Activated T-helper 1 cell treated with anti-CD3 and anti-CD28 coated beads, Interleukin-12 subunit alpha, Interleukin-12 subunit beta, Interleukin-2, Interleukin-4 antibody, amounts not matched to agents 30 ng/mL and 10 ng/mL and 1 ng/mL, durations not matched to agents 14 hours and 24 hours and 36 hours (primary cell): ENCODE measurements at regions of chr7 and their contacts with region 1.

Region 1: DNA sequence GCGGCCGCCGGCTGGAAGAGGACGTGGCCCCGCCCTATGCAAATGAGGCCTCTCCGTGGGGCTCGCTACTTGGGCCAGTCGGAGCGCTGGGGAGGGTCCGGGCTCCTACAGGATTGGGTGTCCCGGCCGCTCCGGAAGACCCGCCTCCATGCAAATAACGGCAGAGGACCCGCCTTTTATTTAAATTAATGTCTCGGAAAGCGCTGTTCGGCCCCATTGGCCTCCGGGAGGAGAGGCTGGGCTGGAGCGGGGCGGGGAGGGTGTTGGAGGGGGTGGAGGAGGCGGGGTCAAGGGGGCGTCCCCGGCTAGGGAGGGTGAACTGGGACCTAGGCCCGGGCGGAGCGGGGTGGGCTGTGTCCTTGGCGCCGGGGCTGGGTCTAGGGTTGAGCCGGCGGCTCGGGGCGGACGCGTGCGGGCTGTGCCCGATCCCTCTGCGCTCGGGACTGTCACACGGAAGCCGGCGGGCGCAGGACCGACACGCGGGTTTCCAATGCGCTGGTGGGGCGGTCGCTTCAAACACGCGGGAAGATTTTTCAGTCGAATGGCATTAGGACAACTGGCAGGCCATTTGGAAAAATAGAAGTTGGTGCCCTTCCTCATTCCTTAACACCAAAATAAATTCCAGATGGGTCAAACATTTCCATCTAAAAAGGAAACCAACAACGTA is 344 bp upstream of the POLM start:
- DNase-seq: peak; percentile 97
- H3K4me3 Mint-ChIP-seq: peak overlapping the region; percentile 90
- H3K27ac Mint-ChIP-seq: peak overlapping the region; percentile 84
- H3K4me1 Mint-ChIP-seq: peaks cover 28% of the 10 kb centered on the region
- H3K27me3 Mint-ChIP-seq: no peaks in the 10 kb centered on the region

Region 2: GRCh38 chr7:43925984-43926797 is 156.5 kb before region 1 on chr7 and contains the start of gene UBE2D4:
- intact Hi-C with region 1: loop called (anchors 2 kb)
- DNase-seq: peak; percentile 88
- H3K4me3 Mint-ChIP-seq: peak within 1 kb of the TSS; percentile 95
- H3K27ac Mint-ChIP-seq: peak within 1 kb of the TSS; percentile 97
- H3K4me1 Mint-ChIP-seq: peaks cover 30% of the 10 kb centered on the region
- H3K27me3 Mint-ChIP-seq: peaks cover 2% of the 10 kb centered on the region
- total RNA-seq, gene UBE2D4: 15.3 and 17.7 TPM in 2 replicates

Region 3: DNA sequence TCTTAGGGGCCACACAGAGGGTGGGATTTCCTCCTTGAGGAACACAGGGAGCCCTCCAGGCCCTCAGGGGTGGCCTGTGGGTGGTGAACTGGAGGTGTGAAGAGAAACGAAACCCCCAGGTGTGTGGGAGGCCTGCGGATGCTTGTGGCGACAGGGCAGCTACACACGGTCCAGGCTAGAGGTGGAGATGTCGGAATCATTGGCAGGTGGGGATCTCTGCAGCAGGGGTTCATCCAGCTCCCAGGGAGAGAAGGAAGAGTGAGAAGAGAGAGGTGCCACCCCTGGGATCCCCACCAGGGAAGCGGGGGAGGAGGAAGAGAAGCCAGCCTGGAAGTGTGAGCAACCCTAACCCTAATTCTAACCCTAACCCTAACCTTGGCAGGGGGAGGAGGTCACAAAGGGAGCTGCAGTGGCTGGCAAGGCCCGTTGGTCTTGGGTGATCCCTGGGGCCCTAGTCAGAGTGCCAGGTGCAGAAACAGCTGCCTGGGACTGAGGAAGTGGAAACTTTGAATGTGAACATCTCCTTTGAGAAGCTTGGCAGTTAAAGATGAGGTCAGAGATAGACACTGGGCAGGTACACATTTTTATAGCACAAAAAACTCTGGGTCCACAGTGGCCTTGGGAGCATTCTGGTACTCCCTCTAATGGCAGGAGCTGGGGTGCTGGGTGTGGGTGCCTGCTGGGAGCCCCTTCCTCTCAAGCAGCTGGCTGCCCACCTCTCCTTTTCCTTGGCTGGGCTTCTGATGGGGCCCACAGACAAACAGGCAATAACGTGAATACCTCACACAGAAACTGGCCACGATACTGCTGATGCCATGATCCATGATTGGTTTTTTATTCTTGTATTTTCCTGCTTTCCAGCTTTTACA is 14.6 kb after region 1 on chr7:
- intact Hi-C with region 1: loop called (anchors 2 kb)
- DNase-seq: no peak
- H3K4me3 Mint-ChIP-seq: no peak overlapping the region
- H3K27ac Mint-ChIP-seq: peak overlapping the region; percentile 75
- H3K4me1 Mint-ChIP-seq: peaks cover 18% of the 10 kb centered on the region
- H3K27me3 Mint-ChIP-seq: peaks cover 5% of the 10 kb centered on the region

Region 4: DNA sequence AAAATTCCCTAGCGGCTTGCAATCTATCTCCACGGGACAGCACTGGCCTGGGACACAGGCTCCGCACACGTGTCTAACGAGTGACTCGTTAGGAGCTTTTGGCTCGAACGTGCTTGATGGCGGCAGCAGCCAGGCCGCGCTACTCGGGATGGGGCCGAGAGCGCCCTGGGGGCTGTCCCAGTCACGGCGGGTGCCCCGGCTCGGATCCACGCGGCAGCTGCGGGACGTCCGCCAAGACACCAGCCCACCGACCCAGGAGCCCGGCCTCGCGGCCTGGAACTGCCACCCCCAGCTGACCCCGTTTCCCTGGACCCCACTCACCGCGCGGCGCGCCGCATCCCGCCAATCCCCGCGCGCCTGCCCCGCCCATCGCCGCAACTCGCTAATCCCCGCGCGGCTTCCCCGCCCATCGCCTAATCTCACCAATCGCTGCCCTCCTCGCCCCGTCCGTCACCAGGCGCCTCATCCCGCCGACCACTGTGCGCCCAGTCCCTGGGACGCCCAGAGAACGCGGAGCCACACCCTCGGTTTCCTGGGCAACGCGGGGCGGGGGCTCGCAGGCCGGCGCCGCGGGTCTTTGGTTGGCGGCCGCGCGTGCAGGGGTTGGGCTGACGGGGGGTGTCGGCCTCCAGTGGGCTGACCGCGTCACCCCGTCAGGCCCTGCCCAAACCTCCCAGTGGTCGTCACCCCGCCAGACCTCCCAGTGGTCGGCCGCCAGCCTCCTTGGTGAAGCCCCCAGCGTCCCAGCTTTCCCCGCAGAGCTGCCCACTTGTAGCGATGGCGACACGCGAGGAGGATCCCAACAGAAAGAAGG is 40.7 kb after region 1 on chr7 and contains the start of gene POLD2:
- intact Hi-C with region 1: loop called (anchors 1 kb)
- DNase-seq: peak; percentile 98
- H3K4me3 Mint-ChIP-seq: peak within 1 kb of the TSS; percentile 96
- H3K27ac Mint-ChIP-seq: peak within 1 kb of the TSS; percentile 90
- H3K4me1 Mint-ChIP-seq: peaks cover 31% of the 10 kb centered on the region
- H3K27me3 Mint-ChIP-seq: peaks cover 7% of the 10 kb centered on the region
- total RNA-seq, gene POLD2: 234 and 250 TPM in 2 replicates

Region 5: DNA sequence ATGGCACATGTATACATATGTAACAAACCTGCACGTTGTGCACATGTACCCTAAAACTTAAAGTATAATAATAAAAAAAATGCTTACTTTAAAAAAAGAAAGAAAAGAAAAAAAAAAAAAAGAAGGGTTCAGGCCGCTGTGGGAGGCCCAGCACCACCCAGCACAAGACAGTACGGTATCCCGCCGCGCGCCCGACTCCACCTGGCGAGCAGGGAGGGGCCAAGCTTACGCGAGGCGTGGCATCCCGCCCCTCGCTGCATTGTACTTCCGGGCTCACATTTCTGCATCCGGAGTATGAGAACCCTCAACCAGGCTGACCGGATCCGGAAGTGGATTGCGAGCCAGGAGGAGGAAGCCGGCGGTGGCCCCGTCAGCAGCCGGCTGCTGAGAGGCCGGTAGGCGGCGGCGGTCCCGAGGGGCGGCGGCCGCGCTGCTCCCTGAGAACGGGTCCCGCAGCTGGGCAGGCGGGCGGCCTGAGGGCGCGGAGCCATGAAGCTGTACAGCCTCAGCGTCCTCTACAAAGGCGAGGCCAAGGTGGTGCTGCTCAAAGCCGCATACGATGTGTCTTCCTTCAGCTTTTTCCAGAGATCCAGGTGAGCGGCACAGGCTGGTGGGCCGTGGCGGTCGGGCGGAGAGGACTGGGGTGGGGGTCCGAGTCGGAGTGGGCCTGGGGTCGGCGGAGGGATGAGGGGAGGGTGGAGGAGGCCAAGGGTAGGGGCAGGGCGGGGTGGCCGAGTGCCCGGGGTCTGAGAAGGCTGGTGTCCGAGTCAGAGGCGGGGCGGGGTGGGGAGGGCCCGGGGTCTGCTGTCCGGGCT is 118.2 kb after region 1 on chr7 and contains the start of gene YKT6:
- intact Hi-C with region 1: loop called (anchors 1 kb)
- DNase-seq: peak; percentile 94
- H3K4me3 Mint-ChIP-seq: peak within 1 kb of the TSS; percentile 88
- H3K27ac Mint-ChIP-seq: peak within 1 kb of the TSS; percentile 52
- H3K4me1 Mint-ChIP-seq: peaks cover 37% of the 10 kb centered on the region
- H3K27me3 Mint-ChIP-seq: no peaks in the 10 kb centered on the region
- total RNA-seq, gene YKT6: 91.8 and 92.1 TPM in 2 replicates

Region 6: GRCh38 chr7:44490351-44491200 is 407.9 kb after region 1 on chr7 and contains the start of gene NUDCD3:
- intact Hi-C with region 1: loop called (anchors 1 kb)
- DNase-seq: peak; percentile 73
- H3K4me3 Mint-ChIP-seq: peak within 1 kb of the TSS; percentile 88
- H3K27ac Mint-ChIP-seq: peak within 1 kb of the TSS; percentile 93
- H3K4me1 Mint-ChIP-seq: peaks cover 44% of the 10 kb centered on the region
- H3K27me3 Mint-ChIP-seq: no peaks in the 10 kb centered on the region
- total RNA-seq, gene NUDCD3: 77.9 and 83.1 TPM in 2 replicates

Region 7: GRCh38 chr7:44748045-44748947 is 665.6 kb after region 1 on chr7 and contains the start of gene ZMIZ2:
- intact Hi-C with region 1: loop called (anchors 5 kb)
- DNase-seq: peak; percentile 88
- H3K4me3 Mint-ChIP-seq: peak within 1 kb of the TSS; percentile 92
- H3K27ac Mint-ChIP-seq: peak within 1 kb of the TSS; percentile 95
- H3K4me1 Mint-ChIP-seq: peaks cover 45% of the 10 kb centered on the region
- H3K27me3 Mint-ChIP-seq: no peaks in the 10 kb centered on the region
- total RNA-seq, gene ZMIZ2: 123 and 129 TPM in 2 replicates